Activated B cell treated with CpG ODN at 0.5 μM for 24 hours (primary cell): ENCODE measurements at regions of chr7 and their contacts with region 1.

Region 1: GRCh38 chr7:4830176-4830575 is 31.7 kb downstream of the PAPOLB start:
- DNase-seq: peak; percentile 32
- ATAC-seq: peak; percentile 69
- H3K4me3 Mint-ChIP-seq: no peak overlapping the region
- H3K27ac Mint-ChIP-seq: no peak overlapping the region
- H3K4me1 Mint-ChIP-seq: peaks cover 4% of the 10 kb centered on the region
- H3K27me3 Mint-ChIP-seq: no peaks in the 10 kb centered on the region
- CTCF ChIP-seq: no peak

Region 2: DNA sequence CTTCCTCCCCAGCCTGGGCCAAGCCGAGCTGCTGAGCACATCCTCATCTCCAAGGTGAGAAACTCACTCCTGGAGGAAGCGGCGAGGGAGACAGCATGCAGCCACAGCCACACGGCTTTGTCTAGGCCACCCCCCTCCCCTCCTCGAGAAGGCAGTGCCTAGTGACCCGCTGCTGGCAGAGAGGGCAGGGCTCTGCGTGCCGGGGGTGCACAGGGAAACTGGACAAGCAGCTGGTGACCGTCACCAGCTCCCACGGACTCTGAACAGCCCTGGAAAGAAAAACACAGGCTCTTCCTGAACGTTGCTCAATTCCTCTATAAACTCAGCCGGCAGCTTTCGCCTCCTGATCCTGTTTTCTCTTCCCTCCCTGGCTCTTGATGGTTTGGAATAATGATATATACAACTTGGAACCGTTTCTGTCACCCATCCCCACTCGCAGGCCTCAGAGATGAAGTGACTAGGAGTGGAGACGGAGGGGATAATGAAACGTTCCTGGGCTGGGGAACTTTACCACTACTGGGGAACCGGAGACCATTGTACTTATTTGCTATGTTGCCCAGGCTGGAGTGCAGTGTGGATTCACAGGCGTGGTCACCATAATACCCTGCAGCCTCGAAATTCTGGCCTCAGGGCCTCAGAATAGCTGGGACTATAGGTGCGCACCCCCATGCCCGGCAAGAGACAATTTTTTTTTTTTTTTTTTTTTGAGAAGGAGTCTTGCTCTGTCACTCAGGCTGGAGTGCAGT is 12.3 kb after region 1 on chr7:
- CTCF ChIA-PET with region 1: no interaction called
- POLR2A ChIA-PET with region 1: no interaction called
- intact Hi-C with region 1: no loop called
- DNase-seq: no peak
- ATAC-seq: no peak
- H3K4me3 Mint-ChIP-seq: no peak overlapping the region
- H3K27ac Mint-ChIP-seq: no peak overlapping the region
- H3K4me1 Mint-ChIP-seq: peaks cover 5% of the 10 kb centered on the region
- H3K27me3 Mint-ChIP-seq: peaks cover 17% of the 10 kb centered on the region
- CTCF ChIP-seq: no peak

Region 3: GRCh38 chr7:4883374-4884144 is 53.4 kb after region 1 on chr7 and contains the start of gene RADIL:
- CTCF ChIA-PET with region 1: no interaction called
- POLR2A ChIA-PET with region 1: no interaction called
- intact Hi-C with region 1: loop called (anchors 1 kb)
- DNase-seq: peak; percentile 62
- ATAC-seq: peak; percentile 97
- H3K4me3 Mint-ChIP-seq: peak within 1 kb of the TSS; percentile 46
- H3K27ac Mint-ChIP-seq: no peak within 1 kb of the TSS
- H3K4me1 Mint-ChIP-seq: peaks cover 12% of the 10 kb centered on the region
- H3K27me3 Mint-ChIP-seq: peaks cover 45% of the 10 kb centered on the region
- CTCF ChIP-seq: no peak
- total RNA-seq, gene RADIL: not detected in 2 replicates